ENCODE measurements at regions of chr14 and their contacts with region 1.

Region 1: GRCh38 chr14:21498553-21499526 is 12.3 kb downstream of the METTL3 start:
- DNase-seq: peak; percentile 31
- H3K27ac ChIP-seq: no peak overlapping the region
- CTCF ChIP-seq: peak; percentile 53

Region 2: GRCh38 chr14:21510735-21511657 is 12.2 kb after region 1 on chr14 and contains the start of gene METTL3:
- CTCF ChIA-PET with region 1: interaction called, 11 read pairs
- POLR2A ChIA-PET with region 1: no interaction called
- DNase-seq: peak; percentile 91
- H3K27ac ChIP-seq: peak within 1 kb of the TSS; percentile 84
- CTCF ChIP-seq: no peak

Region 3: DNA sequence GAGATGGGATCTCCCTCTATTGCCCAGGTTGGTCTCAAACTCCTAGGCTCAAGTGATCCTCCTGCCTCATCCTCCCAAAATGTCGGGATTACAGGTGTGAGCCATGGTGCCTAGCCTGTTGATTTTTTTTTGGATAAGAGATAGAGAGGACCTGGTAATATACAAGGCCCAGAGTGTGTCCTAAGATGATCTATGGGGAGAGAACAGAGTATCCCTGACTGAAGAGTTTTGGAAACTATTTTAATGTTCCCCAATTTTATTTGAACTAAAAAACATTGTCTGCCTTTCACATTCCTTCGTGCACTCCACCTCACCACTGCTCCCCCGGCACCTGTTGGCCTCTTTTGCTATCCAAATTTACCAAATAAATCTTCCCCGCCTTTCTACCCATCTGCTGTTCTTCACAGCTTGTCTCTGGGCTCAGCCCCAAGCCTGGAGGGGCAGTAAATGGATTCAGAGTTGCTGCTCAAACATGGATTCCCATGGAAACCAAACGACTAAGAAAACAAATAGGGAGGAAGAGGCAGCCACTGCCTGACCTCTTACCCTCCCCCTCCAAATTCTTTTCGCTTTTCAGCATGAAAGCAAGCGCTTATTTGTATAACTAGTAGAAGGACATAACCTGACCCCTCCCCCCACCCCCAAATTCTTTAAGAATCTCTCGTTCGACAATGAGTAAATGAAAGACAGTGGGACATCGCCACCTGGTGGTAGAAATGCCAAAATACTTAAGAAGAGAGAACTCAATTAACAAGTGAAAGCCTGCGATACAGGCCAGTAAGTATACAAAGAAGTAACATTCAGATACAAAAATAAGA is 58.5 kb after region 1 on chr14:
- CTCF ChIA-PET with region 1: interaction called, 30 read pairs
- POLR2A ChIA-PET with region 1: interaction called, 7 read pairs
- DNase-seq: peak; percentile 67
- H3K27ac ChIP-seq: no peak overlapping the region
- CTCF ChIP-seq: peak; percentile 68

Measured in RWPE1 (cell line).